WTC11 (cell line): ENCODE measurements at regions of chr5 and their contacts with region 1.

Region 1: GRCh38 chr5:123423278-123424149 is at the start of gene CEP120:
- DNase-seq: peak; percentile 98
- ATAC-seq: peak; percentile 99
- H3K4me3 Mint-ChIP-seq: no peak within 1 kb of the TSS
- H3K27ac Mint-ChIP-seq: peak within 1 kb of the TSS; percentile 99
- H3K4me1 Mint-ChIP-seq: peaks cover 10% of the 10 kb centered on the region
- H3K27me3 Mint-ChIP-seq: no peaks in the 10 kb centered on the region
- CTCF ChIP-seq: peak; percentile 52; the same call in 1 of the 2 replicates
- total RNA-seq, gene CEP120: 15.2 to 19.9 TPM (median 15.9 TPM) in 3 replicates

Region 2: GRCh38 chr5:123412206-123412605 is 11.3 kb before region 1 on chr5:
- CTCF ChIA-PET with region 1: interaction called, 8 read pairs
- POLR2A ChIA-PET with region 1: interaction called, 12 read pairs
- DNase-seq: no peak
- ATAC-seq: no peak
- H3K4me3 Mint-ChIP-seq: no peak overlapping the region
- H3K27ac Mint-ChIP-seq: no peak overlapping the region
- H3K4me1 Mint-ChIP-seq: 0 out of 2 replicates have a peak, but pooled peaks cover 3% of the 10 kb centered on the region
- H3K27me3 Mint-ChIP-seq: no peaks in the 10 kb centered on the region
- CTCF ChIP-seq: no peak

Region 3: GRCh38 chr5:123441408-123441807 is 17.9 kb after region 1 on chr5:
- CTCF ChIA-PET with region 1: interaction called, 15 read pairs
- POLR2A ChIA-PET with region 1: no interaction called
- DNase-seq: no peak
- ATAC-seq: no peak
- H3K4me3 Mint-ChIP-seq: no peak overlapping the region
- H3K27ac Mint-ChIP-seq: no peak overlapping the region
- H3K4me1 Mint-ChIP-seq: peaks cover 8% of the 10 kb centered on the region
- H3K27me3 Mint-ChIP-seq: peaks cover 6% of the 10 kb centered on the region; the same call in 1 of the 2 replicates
- CTCF ChIP-seq: no peak

Region 4: DNA sequence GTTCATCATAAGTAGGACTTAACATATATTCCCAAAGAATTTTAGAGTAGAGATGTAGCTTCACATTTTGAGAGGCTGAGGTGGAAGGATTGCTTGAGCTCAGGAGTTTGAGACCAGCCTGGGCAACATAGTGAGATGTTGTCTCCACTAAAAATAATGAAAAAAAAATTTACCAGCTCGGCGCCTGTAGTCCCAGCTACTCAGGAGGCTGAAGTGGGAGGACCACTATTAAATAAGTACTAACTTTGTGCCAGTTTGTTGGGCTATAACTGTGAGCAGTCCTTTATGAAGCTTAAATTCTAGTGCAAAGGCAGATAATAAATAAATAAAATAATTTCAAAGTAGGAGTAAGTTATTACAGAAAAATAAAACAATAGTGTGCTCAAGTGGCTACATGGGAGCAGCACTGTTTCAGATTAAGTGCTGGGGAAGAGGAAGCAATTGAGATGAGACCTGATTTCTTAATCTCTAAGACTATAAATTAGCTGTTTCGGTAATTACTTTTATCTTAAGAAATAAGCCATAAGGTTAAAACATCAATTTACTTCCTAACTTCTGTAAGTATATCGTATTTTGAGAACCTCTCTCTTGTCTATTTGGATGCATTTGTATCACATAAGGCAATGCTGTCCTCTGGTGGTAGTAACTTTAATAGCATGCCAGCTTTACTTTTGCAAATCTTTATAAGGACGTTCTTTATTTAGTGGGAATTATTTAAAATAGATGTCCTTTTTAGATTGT is 187.3 kb after region 1 on chr5:
- CTCF ChIA-PET with region 1: interaction called, 28 read pairs
- POLR2A ChIA-PET with region 1: interaction called, 5 read pairs
- DNase-seq: no peak
- ATAC-seq: peak; percentile 22; the same call in 1 of the 2 replicates
- H3K4me3 Mint-ChIP-seq: no peak overlapping the region
- H3K27ac Mint-ChIP-seq: no peak overlapping the region
- H3K4me1 Mint-ChIP-seq: no peaks in the 10 kb centered on the region
- H3K27me3 Mint-ChIP-seq: no peaks in the 10 kb centered on the region
- CTCF ChIP-seq: peak; percentile 67

Region 5: DNA sequence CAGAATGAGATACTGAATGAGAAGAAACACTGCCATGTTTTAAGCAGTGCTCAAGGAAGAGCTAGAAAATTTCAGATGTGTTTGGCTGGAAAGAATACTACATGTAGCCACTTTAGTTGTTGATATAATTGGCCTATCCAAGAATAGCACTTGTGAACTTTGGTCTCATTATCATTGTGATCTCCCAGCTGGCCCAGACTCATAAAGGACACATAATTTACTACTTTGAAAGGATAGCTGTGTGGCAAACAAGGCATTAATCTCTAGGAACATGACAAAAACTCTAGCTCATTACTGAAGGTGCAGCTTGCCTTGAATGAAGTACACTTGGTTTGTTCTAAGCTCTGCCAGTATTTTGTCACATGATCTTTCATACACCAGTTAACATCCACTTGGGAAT is 444.8 kb after region 1 on chr5:
- CTCF ChIA-PET with region 1: no interaction called
- POLR2A ChIA-PET with region 1: no interaction called
- DNase-seq: no peak
- ATAC-seq: no peak
- H3K4me3 Mint-ChIP-seq: no peak overlapping the region
- H3K27ac Mint-ChIP-seq: no peak overlapping the region
- H3K4me1 Mint-ChIP-seq: peaks cover 16% of the 10 kb centered on the region
- H3K27me3 Mint-ChIP-seq: peaks cover 8% of the 10 kb centered on the region; the same call in 1 of the 2 replicates
- CTCF ChIP-seq: no peak

Region 6: DNA sequence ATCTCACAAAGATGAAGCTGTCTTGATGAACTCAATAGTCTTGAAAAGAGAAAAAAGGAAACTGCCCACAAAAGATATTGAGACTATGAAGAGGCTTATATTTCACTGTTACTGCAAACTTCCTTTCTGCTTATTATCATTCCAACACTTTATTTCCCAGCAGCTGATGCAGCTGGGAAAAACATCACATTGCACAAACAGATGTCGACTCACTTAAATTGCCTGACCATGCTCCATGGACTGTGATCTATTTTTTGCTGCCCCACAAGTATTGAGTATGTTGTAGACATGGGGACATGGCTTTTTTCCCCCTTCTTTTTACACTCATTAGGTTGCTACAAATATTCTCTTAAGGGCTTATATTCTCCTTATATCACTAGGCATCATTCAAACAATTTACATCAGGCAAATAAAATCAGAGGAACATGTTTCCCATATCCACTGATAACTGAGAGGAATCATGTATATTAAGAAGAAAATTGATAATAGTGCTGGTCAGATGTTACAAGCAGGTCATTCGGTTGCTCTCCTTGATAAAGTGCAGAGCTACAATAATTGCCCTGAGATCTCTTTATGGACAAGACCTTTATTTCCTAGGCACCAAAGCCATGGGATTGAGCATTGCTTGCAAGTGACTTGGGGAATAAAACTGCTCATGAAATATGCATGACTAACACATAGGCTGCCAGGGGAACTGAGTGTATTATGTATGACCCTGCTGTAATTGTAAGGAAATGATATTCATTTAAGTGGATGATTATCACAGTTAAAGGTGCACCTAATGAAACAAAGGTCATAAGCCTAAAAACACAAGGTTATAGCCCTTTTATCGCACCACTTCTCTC is 813.1 kb after region 1 on chr5:
- CTCF ChIA-PET with region 1: no interaction called
- POLR2A ChIA-PET with region 1: no interaction called
- DNase-seq: no peak
- ATAC-seq: no peak
- H3K4me3 Mint-ChIP-seq: 0 out of 2 replicates have a peak overlapping the region, but pooled peaks have one; percentile 5
- H3K27ac Mint-ChIP-seq: 0 out of 2 replicates have a peak overlapping the region, but pooled peaks have one; percentile 42
- H3K4me1 Mint-ChIP-seq: peaks cover 68% of the 10 kb centered on the region
- H3K27me3 Mint-ChIP-seq: peaks cover 5% of the 10 kb centered on the region; the same call in 1 of the 2 replicates
- CTCF ChIP-seq: no peak